Thyroid gland (tissue), 4 donors: ENCODE measurements at regions of chr20 and their contacts with region 1.

Region 1: DNA sequence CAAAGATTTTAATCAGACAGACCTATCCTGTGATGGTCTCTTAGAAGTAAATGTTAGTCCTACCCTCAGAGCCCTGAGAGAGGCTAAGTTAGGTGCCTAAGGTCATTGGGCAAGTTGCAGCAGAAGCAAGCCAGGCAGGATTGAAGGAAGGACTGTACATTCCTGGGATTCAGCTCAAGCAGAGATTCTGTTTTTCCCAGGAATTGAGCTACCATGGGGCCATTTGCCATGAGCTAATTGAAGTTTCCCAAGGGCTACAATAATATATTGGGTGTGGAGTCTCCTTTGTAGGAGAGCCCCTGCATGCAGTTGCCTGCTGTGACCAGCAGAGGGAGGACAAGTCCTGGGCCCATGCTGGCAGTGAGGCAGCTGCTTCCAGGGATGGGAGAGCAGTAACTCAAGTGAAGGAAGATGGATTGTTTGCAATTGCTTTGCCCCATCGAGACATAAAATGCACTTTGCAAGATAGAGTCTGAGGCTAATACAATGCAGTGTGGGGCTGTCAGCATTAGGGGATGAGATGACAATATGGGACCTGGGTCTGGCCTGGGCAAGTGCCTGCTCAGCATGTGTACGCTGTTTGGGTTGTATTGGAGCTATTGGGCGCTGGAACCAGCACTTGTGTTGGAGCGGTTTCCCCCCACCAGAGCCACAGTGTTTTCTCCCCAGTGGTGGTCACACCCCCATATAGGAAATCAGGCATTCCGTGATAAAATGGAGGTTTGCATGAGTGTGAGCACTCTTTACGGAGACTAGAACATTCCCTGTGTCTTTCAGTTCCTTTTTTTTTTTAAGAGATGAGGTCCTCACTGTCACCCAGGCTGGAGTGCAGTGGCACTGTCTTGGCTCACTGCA is 27.9 kb downstream of the DNMT3B start:
- DNase-seq: peak; percentile 71 to 75
- H3K4me3 ChIP-seq: no peak overlapping the region
- H3K27ac ChIP-seq: no peak overlapping the region
- H3K4me1 ChIP-seq: no peaks in the 10 kb centered on the region
- H3K27me3 ChIP-seq: no peaks in the 10 kb centered on the region
- CTCF ChIP-seq: peak; percentile 89 to 99 (median 96)
- POLR2A ChIP-seq: no peak

Region 2: DNA sequence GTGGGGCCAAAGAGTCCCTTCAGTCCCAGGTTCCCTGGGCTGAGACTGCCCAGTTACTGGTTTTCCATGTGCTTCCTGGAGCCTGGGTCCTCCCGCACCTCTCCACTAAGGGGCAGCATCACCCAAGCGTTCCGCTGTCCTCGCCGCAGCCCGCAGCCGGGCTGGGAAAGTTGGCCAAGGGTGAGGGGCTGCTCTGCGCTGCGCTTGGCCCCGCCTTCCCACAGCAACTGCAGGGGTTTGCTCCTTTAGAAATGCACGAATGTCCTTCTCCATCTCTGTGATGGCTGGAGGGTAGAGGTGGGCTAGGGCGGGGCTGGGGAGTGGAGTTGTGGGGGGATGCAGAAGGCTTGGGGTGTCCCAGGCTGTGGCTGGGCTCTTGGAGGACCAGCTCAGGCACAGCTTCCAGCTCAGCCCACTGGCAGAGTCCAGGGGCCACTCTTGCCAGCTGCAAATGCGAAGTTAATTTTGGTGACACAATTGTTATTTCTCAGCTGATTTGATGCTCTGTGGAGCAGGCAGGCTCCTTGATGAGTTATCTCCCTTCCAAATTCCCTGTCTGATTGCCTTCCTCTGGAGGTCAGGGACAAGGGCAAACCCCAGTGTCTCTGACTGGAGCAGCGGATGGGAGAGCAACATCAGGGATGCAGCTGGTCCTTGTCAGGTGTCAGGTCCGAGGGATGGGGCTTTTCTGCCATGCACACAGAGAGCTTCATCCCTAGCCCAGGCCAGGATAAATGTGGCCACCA is 268.2 kb before region 1 on chr20:
- intact Hi-C with region 1: loop called (anchors 10 kb)
- DNase-seq: peak; percentile 64
- H3K4me3 ChIP-seq: no peak overlapping the region
- H3K27ac ChIP-seq: no peak overlapping the region
- H3K4me1 ChIP-seq: peaks cover 9 to 15% of the 10 kb centered on the region in 2 donors
- H3K27me3 ChIP-seq: no peaks in the 10 kb centered on the region
- CTCF ChIP-seq: peak; percentile 45 to 85 (median 76)
- POLR2A ChIP-seq: no peak

Region 3: GRCh38 chr20:32727683-32728082 is 62.4 kb before region 1 on chr20:
- intact Hi-C with region 1: no loop called
- DNase-seq: peak; percentile 90 to 92
- H3K4me3 ChIP-seq: no peak overlapping the region
- H3K27ac ChIP-seq: peak overlapping the region in 2 of 3 donors; percentile 45 to 73
- H3K4me1 ChIP-seq: peaks cover 37 to 53% of the 10 kb centered on the region in 2 donors
- H3K27me3 ChIP-seq: no peaks in the 10 kb centered on the region
- CTCF ChIP-seq: no peak
- POLR2A ChIP-seq: no peak

Region 4: GRCh38 chr20:32894026-32894483 is 103.9 kb after region 1 on chr20:
- intact Hi-C with region 1: loop called (anchors 5 kb)
- DNase-seq: peak; percentile 43 to 50
- H3K4me3 ChIP-seq: no peak overlapping the region
- H3K27ac ChIP-seq: no peak overlapping the region
- H3K4me1 ChIP-seq: peaks cover 0 to 7% of the 10 kb centered on the region in 2 donors
- H3K27me3 ChIP-seq: no peaks in the 10 kb centered on the region
- CTCF ChIP-seq: peak in 4 of 6 experiments; percentile 24 to 40 (median 32)
- POLR2A ChIP-seq: no peak